Esophagus squamous epithelium (tissue), 5 donors: ENCODE measurements at regions of chr1 and their contacts with region 1.

Region 1: DNA sequence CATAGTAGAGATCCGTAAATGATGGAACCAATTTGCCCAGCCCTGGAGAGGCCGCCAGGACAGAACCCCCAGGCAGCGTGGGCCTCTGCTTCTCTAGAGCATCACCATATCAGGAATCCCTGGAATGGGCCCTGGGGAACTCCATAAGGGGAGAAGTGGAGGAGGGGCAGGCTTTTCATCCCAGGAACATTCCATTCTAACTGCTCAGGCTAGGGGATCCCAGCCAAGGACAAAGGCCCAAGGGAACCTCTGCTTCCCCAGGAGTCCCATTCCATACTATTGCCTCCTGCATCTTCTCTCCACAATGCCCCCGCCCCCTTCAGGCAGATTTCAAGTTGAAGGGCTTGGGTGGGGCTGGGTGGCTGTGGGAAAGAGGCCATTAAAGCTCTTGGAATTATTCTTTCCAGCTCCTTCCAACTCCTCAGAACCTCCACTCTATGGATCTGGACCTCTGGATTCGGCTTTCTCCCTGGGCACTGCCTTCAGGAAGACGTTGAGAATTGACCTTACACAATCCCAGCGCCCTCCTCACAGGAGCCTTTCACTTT is 6.0 kb downstream of the TRNP1 start:
- DNase-seq: no peak
- H3K4me3 ChIP-seq: no peak overlapping the region
- H3K27ac ChIP-seq: peak overlapping the region; percentile 72 to 94 (median 92)
- H3K4me1 ChIP-seq: peaks cover 51 to 100% (median 73%) of the 10 kb centered on the region in 3 donors
- H3K27me3 ChIP-seq: peaks cover 0 to 18% (median 0%) of the 10 kb centered on the region in 4 donors
- CTCF ChIP-seq: no peak
- POLR2A ChIP-seq: peak in 1 of 4 donors; percentile 16

Region 2: GRCh38 chr1:27031235-27032118 is 32.0 kb after region 1 on chr1:
- intact Hi-C with region 1: loop called (anchors 5 kb)
- DNase-seq: no peak
- H3K4me3 ChIP-seq: peak overlapping the region; percentile 18 to 63 (median 32)
- H3K27ac ChIP-seq: peak overlapping the region; percentile 86 to 94 (median 92)
- H3K4me1 ChIP-seq: peaks cover 17 to 65% (median 38%) of the 10 kb centered on the region in 3 donors
- H3K27me3 ChIP-seq: no peaks in the 10 kb centered on the region
- CTCF ChIP-seq: no peak
- POLR2A ChIP-seq: peak in 1 of 4 donors; percentile 19

Region 3: DNA sequence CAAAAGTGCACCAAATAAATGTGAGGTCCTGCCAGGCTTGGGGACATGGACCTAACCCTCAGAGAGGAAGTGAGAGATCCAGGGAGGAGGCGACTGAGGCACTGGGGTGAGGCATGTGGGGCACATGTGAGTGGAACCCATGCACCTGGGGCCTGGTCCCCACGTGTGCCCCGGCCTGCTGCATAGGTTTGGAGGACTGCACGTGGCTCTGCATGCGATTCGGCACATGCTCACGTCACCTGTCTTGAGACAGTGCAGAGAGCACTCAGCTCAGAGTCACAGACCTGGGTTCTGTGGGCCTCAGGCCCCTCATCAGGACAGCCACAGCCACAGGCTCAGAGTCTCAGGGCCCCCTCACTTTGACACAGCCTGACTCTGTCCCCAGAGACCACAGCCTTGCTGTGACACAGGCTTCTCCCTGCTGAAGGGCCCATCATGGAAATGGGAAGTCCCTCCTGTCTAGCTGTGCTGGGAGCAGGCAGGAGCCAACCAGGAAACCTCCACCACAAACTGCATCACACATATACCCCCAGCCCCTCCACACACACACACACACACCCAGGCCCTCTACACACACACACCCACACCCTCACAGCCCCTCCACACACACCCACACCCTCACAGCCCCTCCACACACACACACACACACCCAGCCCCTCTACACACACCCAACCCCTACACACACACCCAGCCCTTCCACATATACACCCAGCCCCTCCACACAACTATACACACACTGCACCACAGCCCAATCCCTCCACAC is 107.2 kb after region 1 on chr1:
- intact Hi-C with region 1: no loop called
- DNase-seq: no peak
- H3K4me3 ChIP-seq: no peak overlapping the region
- H3K27ac ChIP-seq: no peak overlapping the region
- H3K4me1 ChIP-seq: peaks cover 0 to 20% (median 5%) of the 10 kb centered on the region in 3 donors
- H3K27me3 ChIP-seq: no peaks in the 10 kb centered on the region
- CTCF ChIP-seq: no peak
- POLR2A ChIP-seq: no peak